ENCODE measurements at regions of chr6 and their contacts with region 1.

Region 1: GRCh38 chr6:89468998-89469397 is 36.0 kb downstream of the ANKRD6 start:
- DNase-seq: no peak
- ATAC-seq: no peak
- H3K4me3 ChIP-seq: no peak overlapping the region
- H3K27ac ChIP-seq: no peak overlapping the region
- H3K4me1 ChIP-seq: peaks cover 0 to 16% (median 7%) of the 10 kb centered on the region in 9 donors
- H3K27me3 ChIP-seq: no peaks in the 10 kb centered on the region
- CTCF ChIP-seq: no peak

Region 2: DNA sequence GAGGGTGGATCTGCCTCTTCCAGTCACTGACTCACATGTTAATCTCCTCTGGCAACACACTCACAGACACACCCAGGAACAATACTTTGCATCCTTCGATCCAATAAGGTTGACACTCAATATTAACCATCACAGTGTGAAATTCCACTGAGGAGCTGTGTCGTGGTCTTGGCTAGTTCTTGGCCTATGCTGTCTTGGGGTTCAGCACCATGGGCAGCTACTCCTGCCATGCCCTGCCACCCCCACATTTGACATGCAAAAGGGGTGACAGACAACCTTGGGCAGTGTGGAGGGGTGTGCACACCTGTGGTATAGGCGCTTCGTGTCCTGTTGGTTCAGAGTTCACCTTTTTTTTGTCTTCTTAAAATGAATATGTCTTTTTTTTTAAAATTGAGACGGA is 10.3 kb before region 1 on chr6:
- intact Hi-C with region 1: no loop called
- DNase-seq: no peak
- ATAC-seq: no peak
- H3K4me3 ChIP-seq: no peak overlapping the region
- H3K27ac ChIP-seq: no peak overlapping the region
- H3K4me1 ChIP-seq: no peaks in the 10 kb centered on the region
- H3K27me3 ChIP-seq: no peaks in the 10 kb centered on the region
- CTCF ChIP-seq: no peak

Region 3: GRCh38 chr6:89506818-89507217 is 37.8 kb after region 1 on chr6:
- intact Hi-C with region 1: loop called in 1 of 10 experiments (anchors 1 kb)
- DNase-seq: no peak
- ATAC-seq: no peak
- H3K4me3 ChIP-seq: no peak overlapping the region
- H3K27ac ChIP-seq: no peak overlapping the region
- H3K4me1 ChIP-seq: peaks cover 0 to 16% (median 0%) of the 10 kb centered on the region in 9 donors
- H3K27me3 ChIP-seq: no peaks in the 10 kb centered on the region
- CTCF ChIP-seq: no peak